Natural killer cell (primary cell): ENCODE measurements at regions of chr4 and their contacts with region 1.

Region 1: DNA sequence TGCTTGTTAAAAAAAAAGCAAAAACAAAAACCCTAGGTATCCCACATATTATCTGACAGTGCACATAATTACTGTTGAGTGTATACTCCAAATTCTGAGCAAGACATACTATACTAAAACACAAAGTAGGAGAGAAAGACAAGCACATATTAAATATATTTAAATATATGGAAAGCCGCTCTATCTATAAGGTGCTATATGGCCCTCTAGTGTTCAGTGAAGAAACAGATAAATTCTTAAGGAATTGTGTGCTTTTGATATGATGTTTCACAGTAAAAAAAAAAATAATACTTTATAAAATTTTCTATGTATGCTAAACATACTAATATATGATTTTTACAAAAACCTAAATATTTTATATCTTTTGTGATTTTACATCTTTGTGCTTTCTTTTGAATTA is 137.8 kb downstream of the FBXW7 start:
- DNase-seq: peak in 1 of 2 donors; percentile 15
- ATAC-seq: no peak
- H3K4me3 ChIP-seq: no peak overlapping the region
- H3K4me3 Mint-ChIP-seq: no peak overlapping the region
- H3K27ac ChIP-seq: no peak overlapping the region
- H3K27ac Mint-ChIP-seq: no peak overlapping the region
- H3K4me1 ChIP-seq: peaks cover 4% of the 10 kb centered on the region
- H3K4me1 Mint-ChIP-seq: peaks cover 55 to 62% of the 10 kb centered on the region in 2 donors
- H3K27me3 ChIP-seq: no peaks in the 10 kb centered on the region
- H3K27me3 Mint-ChIP-seq: no peaks in the 10 kb centered on the region
- CTCF ChIP-seq: peak; percentile 24

Region 2: GRCh38 chr4:152045807-152046571 is 352.1 kb before region 1 on chr4:
- intact Hi-C with region 1: loop called (anchors 10 kb)
- DNase-seq: peak; percentile 27 to 30
- ATAC-seq: peak in 2 of 3 donors; percentile 47 to 73
- H3K4me3 ChIP-seq: no peak overlapping the region
- H3K4me3 Mint-ChIP-seq: peak overlapping the region; percentile 45
- H3K27ac ChIP-seq: no peak overlapping the region
- H3K27ac Mint-ChIP-seq: no peak overlapping the region
- H3K4me1 ChIP-seq: peaks cover 10% of the 10 kb centered on the region
- H3K4me1 Mint-ChIP-seq: peaks cover 0 to 8% of the 10 kb centered on the region in 2 donors
- H3K27me3 ChIP-seq: peaks cover 9% of the 10 kb centered on the region
- H3K27me3 Mint-ChIP-seq: peaks cover 20 to 22% of the 10 kb centered on the region in 2 donors
- CTCF ChIP-seq: peak; percentile 62

Region 3: DNA sequence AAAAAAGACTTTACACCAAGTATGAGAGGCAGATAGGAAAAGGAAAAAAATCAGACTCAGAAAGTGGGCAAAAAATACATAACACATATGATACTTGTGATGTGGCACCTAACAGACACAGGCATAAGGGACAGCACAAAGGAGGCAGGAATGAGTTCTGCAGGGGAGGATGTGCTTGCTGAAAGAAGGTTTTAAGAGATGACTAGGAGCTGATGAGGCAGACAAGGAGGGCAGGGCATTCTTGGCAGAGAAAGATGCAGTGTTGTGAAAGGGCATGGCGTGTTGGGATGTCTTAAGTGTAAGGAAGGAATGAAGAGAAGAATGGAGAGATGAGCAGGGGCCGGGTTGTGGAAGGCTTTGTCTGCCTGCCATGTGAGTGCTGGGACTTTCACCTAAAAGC is 331.4 kb after region 1 on chr4:
- intact Hi-C with region 1: no loop called
- DNase-seq: no peak
- ATAC-seq: no peak
- H3K4me3 ChIP-seq: no peak overlapping the region
- H3K4me3 Mint-ChIP-seq: no peak overlapping the region
- H3K27ac ChIP-seq: no peak overlapping the region
- H3K27ac Mint-ChIP-seq: no peak overlapping the region
- H3K4me1 ChIP-seq: no peaks in the 10 kb centered on the region
- H3K4me1 Mint-ChIP-seq: no peaks in the 10 kb centered on the region
- H3K27me3 ChIP-seq: no peaks in the 10 kb centered on the region
- H3K27me3 Mint-ChIP-seq: peaks cover 6 to 9% of the 10 kb centered on the region in 2 donors
- CTCF ChIP-seq: no peak